ENCODE measurements at regions of chr2 and their contacts with region 1.

Region 1: GRCh38 chr2:121736462-121737341 is at the start of gene NIFK:
- DNase-seq: peak; percentile 98 to 99 (median 99)
- H3K4me3 ChIP-seq: peak within 1 kb of the TSS; percentile 61
- H3K27ac ChIP-seq: peak within 1 kb of the TSS in 1 of 2 donors; percentile 67
- H3K4me1 ChIP-seq: no peaks in the 10 kb centered on the region
- H3K27me3 ChIP-seq: no peaks in the 10 kb centered on the region
- CTCF ChIP-seq: no peak
- EP300 ChIP-seq: no peak
- POLR2A ChIP-seq: peak; percentile 31
- total RNA-seq, gene NIFK: 37.3 to 82.1 (median 49.9) TPM

Region 2: DNA sequence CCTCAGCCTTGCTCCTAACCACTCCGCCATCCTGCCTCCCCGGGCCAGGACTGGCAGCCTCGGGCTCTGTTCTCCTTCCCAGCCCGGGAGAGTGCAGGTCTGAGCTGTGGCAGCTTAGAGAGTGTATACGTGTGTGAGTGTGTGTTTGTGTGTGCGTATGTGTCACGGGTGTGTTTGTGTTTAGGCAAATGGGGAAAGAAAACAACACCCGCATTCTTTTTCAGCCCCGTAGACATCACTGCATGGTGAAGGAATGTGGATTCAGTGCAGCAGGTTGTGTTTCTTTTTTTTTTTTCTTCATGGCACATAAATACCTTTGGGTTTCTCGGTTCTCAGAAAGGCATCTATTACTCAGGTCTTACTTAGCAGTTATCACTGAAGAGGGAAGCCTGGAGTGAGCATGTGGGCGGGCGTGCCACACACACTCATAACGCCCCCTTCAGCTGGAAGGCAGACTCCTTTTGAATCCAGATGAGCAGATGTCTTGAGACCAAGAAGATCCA is 956.9 kb before region 1 on chr2:
- intact Hi-C with region 1: loop called in 1 of 4 experiments (anchors 10 kb)
- DNase-seq: no peak
- H3K4me3 ChIP-seq: no peak overlapping the region
- H3K27ac ChIP-seq: no peak overlapping the region
- H3K4me1 ChIP-seq: peaks cover 40% of the 10 kb centered on the region
- H3K27me3 ChIP-seq: no peaks in the 10 kb centered on the region
- CTCF ChIP-seq: no peak
- EP300 ChIP-seq: no peak
- POLR2A ChIP-seq: no peak

Region 3: DNA sequence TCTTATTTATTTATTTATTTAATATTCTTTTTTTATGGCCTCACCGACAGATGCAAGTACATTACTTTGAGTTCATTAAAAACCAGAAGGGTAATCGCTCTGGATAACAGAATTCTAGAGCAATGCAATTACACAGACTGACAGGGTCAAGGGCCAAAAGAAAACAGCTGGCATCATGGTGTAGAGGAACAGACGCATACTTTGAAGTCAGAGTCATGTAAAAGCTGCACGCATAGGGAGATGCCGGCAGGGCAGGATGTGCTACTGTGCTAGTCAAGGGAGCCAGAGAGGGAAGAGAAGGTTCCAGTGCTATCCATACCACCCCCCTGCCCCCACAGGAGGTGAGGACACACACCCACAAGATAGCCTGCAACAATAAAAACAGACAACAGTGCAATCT is 336.5 kb before region 1 on chr2:
- intact Hi-C with region 1: no loop called
- DNase-seq: no peak
- H3K4me3 ChIP-seq: no peak overlapping the region
- H3K27ac ChIP-seq: no peak overlapping the region
- H3K4me1 ChIP-seq: no peaks in the 10 kb centered on the region
- H3K27me3 ChIP-seq: no peaks in the 10 kb centered on the region
- CTCF ChIP-seq: no peak
- EP300 ChIP-seq: no peak
- POLR2A ChIP-seq: no peak

Region 4: GRCh38 chr2:121649596-121650314 is 86.9 kb before region 1 on chr2:
- intact Hi-C with region 1: loop called in 2 of 4 experiments (anchors 10 kb)
- DNase-seq: peak; percentile 94 to 97 (median 95)
- H3K4me3 ChIP-seq: peak overlapping the region; percentile 92
- H3K27ac ChIP-seq: peak overlapping the region; percentile 86 to 90
- H3K4me1 ChIP-seq: peaks cover 9% of the 10 kb centered on the region
- H3K27me3 ChIP-seq: no peaks in the 10 kb centered on the region
- CTCF ChIP-seq: peak in 1 of 3 donors; percentile 16
- EP300 ChIP-seq: peak; percentile 23
- POLR2A ChIP-seq: no peak